ENCODE measurements at regions of chr10 and their contacts with region 1.

Region 1: DNA sequence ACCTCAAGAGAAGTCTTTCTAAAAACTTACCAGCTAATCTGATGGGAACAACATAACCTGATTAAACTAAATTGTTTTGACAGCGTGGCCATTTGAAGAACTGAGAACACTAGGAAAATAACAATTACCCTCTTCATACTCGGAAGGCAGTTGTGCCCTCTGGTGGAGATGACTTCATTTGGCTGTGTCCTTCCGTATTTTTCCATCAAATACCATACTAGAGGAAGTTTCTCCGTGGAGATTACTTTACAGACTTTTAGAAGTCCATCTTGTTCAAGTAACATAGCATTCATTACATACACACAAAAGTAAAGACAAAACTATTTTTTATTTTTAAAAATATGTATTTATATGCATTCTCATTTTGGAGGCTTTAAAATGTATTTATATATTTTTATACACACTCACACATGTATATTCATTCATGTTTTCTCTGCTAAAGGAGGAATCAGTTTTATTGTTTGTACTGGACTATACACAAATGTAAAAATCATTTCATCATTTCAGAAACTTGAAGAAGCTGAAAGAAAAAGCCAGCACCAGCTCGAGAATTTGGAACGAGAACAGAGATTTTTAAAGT is 25.2 kb downstream of the SMNDC1 start:
- DNase-seq: no peak
- H3K4me3 ChIP-seq: peak overlapping the region in 2 of 4 donors; percentile 2 to 17
- H3K27ac ChIP-seq: peak overlapping the region; percentile 42 to 81 (median 63)
- H3K4me1 ChIP-seq: peaks cover 44 to 71% (median 62%) of the 10 kb centered on the region in 4 donors
- H3K27me3 ChIP-seq: no peaks in the 10 kb centered on the region
- CTCF ChIP-seq: peak; percentile 77 to 85 (median 80)
- EP300 ChIP-seq: no peak
- POLR2A ChIP-seq: no peak

Region 2: DNA sequence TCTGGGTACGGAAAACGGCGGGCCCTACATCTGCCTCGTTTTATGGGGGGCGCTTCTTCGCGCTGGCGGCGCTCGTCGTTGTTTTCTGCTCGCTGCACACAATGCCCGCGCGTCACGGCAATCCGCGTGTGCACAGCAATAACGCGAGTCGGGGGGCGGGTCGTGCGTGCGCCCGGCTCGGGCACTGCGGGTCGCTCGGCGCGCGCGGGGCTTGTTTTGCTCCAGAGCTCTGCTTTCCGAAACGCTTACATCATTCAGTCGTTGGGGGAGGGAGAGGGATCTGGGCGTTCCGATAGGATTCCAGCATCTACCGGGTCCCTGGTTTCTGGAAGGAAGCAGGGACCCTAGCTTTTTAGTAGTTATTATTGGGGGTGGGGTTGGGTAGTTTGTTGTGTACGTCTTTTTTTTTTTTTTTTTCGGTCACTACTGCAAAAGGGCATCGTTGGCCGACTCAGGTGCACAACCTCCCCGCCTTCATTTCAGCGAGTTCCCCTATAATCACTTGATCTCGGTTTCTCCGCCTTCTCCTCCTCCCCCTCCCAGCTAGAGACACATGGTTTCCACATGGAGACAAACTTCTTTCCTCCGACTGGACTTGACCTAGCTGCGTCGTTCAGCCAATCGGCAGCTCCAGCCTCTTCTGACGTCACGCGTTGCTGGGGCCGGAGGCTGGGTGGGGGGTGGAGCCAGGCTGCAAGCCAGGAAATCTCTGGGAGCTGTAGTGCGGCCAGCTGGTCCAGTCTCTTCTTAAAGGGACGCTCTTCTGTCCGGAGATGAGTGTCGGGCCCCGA is 68.6 kb before region 1 on chr10:
- intact Hi-C with region 1: loop called (anchors 2 kb)
- DNase-seq: peak; percentile 99
- H3K4me3 ChIP-seq: peak overlapping the region; percentile 80 to 91 (median 86)
- H3K27ac ChIP-seq: peak overlapping the region; percentile 94 to 100 (median 98)
- H3K4me1 ChIP-seq: peaks cover 42 to 54% (median 53%) of the 10 kb centered on the region in 4 donors
- H3K27me3 ChIP-seq: no peaks in the 10 kb centered on the region
- CTCF ChIP-seq: no peak
- EP300 ChIP-seq: peak; percentile 47
- POLR2A ChIP-seq: peak; percentile 64

Region 3: DNA sequence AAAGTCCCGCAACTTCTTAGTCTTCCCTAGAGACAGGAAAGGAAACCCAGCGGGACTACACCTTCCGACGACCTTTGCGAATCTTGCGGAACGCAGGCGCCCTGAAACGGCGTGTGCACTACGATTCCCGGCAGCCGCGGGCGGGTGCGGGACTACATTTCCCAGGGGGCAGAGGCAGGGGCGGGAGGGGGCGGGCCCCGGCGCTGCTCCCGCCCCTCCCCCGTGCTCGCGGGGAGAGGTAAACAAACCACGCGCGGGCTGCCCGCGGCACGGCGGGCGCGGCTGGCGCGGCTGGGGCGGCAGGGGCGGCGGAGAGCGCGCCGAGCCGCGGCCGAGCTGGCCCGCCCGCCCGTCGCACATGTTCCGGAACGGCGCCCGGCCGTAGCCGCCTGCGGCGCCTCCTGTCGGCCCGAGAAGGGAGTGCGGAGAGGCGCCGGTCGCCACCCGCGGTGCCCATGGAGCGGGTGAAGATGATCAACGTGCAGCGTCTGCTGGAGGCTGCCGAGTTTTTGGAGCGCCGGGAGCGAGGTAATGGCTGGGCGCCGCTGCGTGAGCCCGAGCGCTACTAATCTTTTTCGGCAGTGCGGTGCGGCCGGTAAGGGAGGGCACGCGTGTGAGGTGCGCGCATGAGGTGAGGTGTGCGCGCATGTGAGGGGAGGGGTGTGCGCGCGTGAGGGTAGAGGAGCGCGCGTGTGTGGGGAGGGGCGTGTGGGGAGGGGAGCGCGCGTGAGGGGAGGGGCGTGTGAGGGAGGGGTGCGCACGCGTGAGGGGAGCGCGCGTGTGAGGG is 53.5 kb before region 1 on chr10:
- intact Hi-C with region 1: loop called (anchors 2 kb)
- DNase-seq: peak; percentile 96
- H3K4me3 ChIP-seq: peak overlapping the region; percentile 81 to 91 (median 86)
- H3K27ac ChIP-seq: peak overlapping the region; percentile 91 to 98 (median 96)
- H3K4me1 ChIP-seq: peaks cover 46 to 69% (median 63%) of the 10 kb centered on the region in 4 donors
- H3K27me3 ChIP-seq: no peaks in the 10 kb centered on the region
- CTCF ChIP-seq: peak; percentile 63 to 78 (median 75)
- EP300 ChIP-seq: no peak
- POLR2A ChIP-seq: no peak

Region 4: DNA sequence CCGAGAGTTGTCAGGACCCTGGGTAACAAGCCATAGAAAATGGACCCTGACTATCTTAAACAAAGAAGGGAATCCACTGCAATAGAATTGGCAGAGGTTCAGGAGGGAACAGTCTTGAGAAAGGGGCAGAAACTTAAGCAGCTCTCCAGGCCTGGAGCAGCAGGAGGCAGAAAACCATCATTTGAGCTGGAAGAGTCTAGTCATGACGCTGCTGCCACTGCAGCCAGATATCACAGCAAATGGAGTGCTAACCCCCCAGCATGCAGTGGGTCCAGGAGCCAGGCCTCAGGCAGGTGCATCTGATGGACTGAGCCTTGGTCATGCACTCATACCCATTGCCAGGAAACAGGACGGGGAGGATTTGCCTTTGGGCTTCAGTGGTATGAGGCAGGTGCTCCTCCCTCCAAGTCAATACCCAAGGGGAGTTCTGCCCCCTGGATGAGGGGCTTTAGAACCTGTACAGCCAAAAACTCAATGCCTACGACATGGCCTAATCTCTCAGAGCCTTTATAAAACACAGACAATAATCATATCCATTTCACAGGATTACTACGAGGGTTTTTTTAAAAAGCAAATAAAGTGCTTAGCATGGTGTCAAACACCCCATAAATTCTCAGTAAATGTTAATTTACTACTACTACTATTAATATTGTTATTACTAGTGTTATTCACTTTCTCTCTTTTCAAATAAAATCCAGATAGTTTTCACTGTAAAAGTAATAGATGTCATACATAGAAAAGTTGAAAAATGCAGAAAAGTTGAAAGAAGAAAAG is 248.9 kb after region 1 on chr10:
- intact Hi-C with region 1: no loop called
- DNase-seq: no peak
- H3K4me3 ChIP-seq: no peak overlapping the region
- H3K27ac ChIP-seq: no peak overlapping the region
- H3K4me1 ChIP-seq: peaks cover 8 to 12% (median 11%) of the 10 kb centered on the region in 4 donors
- H3K27me3 ChIP-seq: peaks cover 0 to 32% (median 3%) of the 10 kb centered on the region in 4 donors
- CTCF ChIP-seq: no peak
- EP300 ChIP-seq: no peak
- POLR2A ChIP-seq: no peak